ENCODE measurements at regions of chr9 and their contacts with region 1.

Region 1: GRCh38 chr9:99807276-99807852 is 14.3 kb upstream of the NR4A3 start:
- DNase-seq: peak; percentile 67 to 78 (median 72)
- H3K4me3 ChIP-seq: no peak overlapping the region
- H3K4me3 Mint-ChIP-seq: no peak overlapping the region
- H3K27ac ChIP-seq: no peak overlapping the region
- H3K27ac Mint-ChIP-seq: peak overlapping the region in 6 of 7 donors; percentile 14 to 67 (median 38)
- H3K4me1 ChIP-seq: no peaks in the 10 kb centered on the region
- H3K4me1 Mint-ChIP-seq: peaks cover 0 to 6% (median 5%) of the 10 kb centered on the region in 4 donors
- H3K27me3 ChIP-seq: no peaks in the 10 kb centered on the region
- H3K27me3 Mint-ChIP-seq: peaks cover 5 to 8% of the 10 kb centered on the region in 2 donors

Region 2: DNA sequence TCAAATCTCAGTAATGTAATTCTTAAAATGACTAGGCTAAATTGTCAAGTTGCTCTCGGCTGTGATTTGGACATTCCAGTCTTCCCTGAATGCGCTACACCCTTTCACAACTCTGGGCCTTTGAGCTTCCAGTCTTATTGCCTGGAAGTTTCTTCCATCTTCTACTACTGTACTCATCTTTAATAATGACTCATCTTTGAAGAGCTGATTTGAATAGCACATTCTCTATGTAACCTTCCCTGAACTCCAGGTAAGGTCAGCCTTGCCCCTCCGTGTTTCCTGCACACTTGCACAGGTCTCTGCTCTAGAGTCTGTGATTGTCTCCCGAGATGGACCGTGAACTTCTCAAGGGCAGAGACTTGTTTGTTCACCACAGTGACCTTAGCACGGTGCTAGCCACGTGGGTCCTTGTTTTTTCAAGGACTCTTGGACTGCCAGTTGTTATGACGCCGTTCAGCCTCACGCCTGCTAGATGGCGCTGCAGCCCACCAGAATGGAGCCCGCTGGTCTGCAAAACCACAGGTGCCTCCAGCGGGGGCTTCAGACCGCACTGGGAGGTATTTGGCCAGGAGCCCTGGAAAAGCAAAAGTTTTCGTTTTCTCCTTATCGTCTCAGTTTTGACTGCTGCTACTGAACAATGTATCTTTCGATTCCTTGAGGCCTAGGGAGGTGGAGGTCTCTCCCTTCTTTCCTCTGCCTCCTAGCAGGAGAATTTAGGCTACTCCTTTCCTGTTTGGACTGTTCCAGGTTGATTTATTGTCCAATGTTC is 540.9 kb before region 1 on chr9:
- CTCF ChIA-PET with region 1: interaction called, 3 read pairs
- POLR2A ChIA-PET with region 1: no interaction called
- intact Hi-C with region 1: loop called (anchors 1 kb)
- DNase-seq: peak; percentile 22 to 52 (median 29)
- H3K4me3 ChIP-seq: no peak overlapping the region
- H3K4me3 Mint-ChIP-seq: peak overlapping the region in 5 of 8 donors; percentile 23 to 64 (median 36)
- H3K27ac ChIP-seq: no peak overlapping the region
- H3K27ac Mint-ChIP-seq: no peak overlapping the region
- H3K4me1 ChIP-seq: peaks cover 8% of the 10 kb centered on the region
- H3K4me1 Mint-ChIP-seq: peaks cover 7 to 12% (median 9%) of the 10 kb centered on the region in 4 donors
- H3K27me3 ChIP-seq: no peaks in the 10 kb centered on the region
- H3K27me3 Mint-ChIP-seq: peaks cover 0 to 2% of the 10 kb centered on the region in 2 donors

Region 3: GRCh38 chr9:99531313-99531712 is 276.1 kb before region 1 on chr9:
- CTCF ChIA-PET with region 1: no interaction called
- POLR2A ChIA-PET with region 1: no interaction called
- intact Hi-C with region 1: no loop called
- DNase-seq: no peak
- H3K4me3 ChIP-seq: no peak overlapping the region
- H3K4me3 Mint-ChIP-seq: no peak overlapping the region
- H3K27ac ChIP-seq: no peak overlapping the region
- H3K27ac Mint-ChIP-seq: no peak overlapping the region
- H3K4me1 ChIP-seq: no peaks in the 10 kb centered on the region
- H3K4me1 Mint-ChIP-seq: no peaks in the 10 kb centered on the region
- H3K27me3 ChIP-seq: no peaks in the 10 kb centered on the region
- H3K27me3 Mint-ChIP-seq: peaks cover 9 to 10% of the 10 kb centered on the region in 2 donors

Region 4: DNA sequence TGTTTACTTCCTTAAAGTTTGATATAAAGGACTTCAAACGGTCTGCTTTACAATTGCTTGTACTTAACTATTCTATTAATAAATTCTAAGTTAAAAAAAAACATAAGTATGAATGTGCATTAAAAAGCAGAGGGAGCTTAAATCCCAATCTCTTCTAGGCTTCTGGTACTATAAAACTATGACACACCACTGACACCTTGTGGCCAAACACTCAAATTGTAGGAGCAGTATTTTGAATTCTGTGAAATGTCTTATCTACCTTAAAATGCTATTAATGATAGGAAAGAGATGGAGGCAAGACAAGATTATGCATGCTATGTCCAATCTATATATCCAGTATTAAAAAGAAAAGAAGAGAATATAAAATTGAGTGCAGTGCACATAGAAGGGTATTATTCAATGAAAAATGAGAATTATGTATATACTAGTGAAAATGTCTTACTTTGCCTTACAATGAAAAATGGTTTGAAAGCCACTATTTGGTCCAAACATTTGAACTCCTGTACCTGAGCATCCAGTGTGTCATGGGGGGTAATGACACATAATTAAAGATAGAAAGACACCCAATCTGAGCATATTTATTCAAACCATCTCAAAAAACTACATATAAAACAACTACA is 203.8 kb after region 1 on chr9:
- CTCF ChIA-PET with region 1: interaction called, 5 read pairs
- POLR2A ChIA-PET with region 1: no interaction called
- intact Hi-C with region 1: loop called (anchors 1 kb)
- DNase-seq: peak; percentile 35 to 56 (median 43)
- H3K4me3 ChIP-seq: no peak overlapping the region
- H3K4me3 Mint-ChIP-seq: no peak overlapping the region
- H3K27ac ChIP-seq: no peak overlapping the region
- H3K27ac Mint-ChIP-seq: no peak overlapping the region
- H3K4me1 ChIP-seq: no peaks in the 10 kb centered on the region
- H3K4me1 Mint-ChIP-seq: peaks cover 0 to 4% (median under 1%) of the 10 kb centered on the region in 4 donors
- H3K27me3 ChIP-seq: no peaks in the 10 kb centered on the region
- H3K27me3 Mint-ChIP-seq: no peaks in the 10 kb centered on the region

Region 5: DNA sequence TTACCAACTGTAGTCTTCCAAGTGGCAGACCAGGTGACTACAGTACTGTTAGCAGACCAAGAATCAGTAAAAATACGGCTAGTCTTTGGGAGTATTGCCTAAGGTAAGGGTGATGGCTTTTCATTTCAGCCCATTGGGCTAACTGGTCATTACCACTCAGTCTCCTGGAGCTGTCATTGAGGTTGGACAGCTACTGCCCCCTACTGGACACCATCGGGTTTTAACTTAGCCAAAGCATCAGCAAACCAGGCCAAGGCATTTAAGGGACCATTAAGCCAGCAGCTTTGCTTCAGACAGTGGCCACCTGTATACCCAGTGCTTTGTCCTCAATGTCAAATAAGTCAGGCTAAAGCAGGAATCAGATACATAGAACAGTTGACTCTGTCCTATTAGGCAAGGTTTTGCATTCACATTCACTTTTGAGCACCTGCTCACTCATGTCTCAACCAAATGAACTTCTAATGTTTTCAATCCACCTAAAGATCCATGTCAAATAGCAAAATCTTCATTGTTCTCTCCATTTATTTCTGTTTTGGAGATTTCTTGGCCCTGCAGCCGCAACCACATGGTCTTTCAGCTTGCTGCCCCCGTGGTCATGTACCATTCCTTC is 408.9 kb after region 1 on chr9:
- CTCF ChIA-PET with region 1: no interaction called
- POLR2A ChIA-PET with region 1: no interaction called
- intact Hi-C with region 1: loop called (anchors 1 kb)
- DNase-seq: peak; percentile 39 to 51 (median 43)
- H3K4me3 ChIP-seq: no peak overlapping the region
- H3K4me3 Mint-ChIP-seq: no peak overlapping the region
- H3K27ac ChIP-seq: no peak overlapping the region
- H3K27ac Mint-ChIP-seq: no peak overlapping the region
- H3K4me1 ChIP-seq: no peaks in the 10 kb centered on the region
- H3K4me1 Mint-ChIP-seq: no peaks in the 10 kb centered on the region
- H3K27me3 ChIP-seq: no peaks in the 10 kb centered on the region
- H3K27me3 Mint-ChIP-seq: no peaks in the 10 kb centered on the region